OCI-LY7 (cell line): ENCODE measurements at regions of chr20 and their contacts with region 1.

Region 1: DNA sequence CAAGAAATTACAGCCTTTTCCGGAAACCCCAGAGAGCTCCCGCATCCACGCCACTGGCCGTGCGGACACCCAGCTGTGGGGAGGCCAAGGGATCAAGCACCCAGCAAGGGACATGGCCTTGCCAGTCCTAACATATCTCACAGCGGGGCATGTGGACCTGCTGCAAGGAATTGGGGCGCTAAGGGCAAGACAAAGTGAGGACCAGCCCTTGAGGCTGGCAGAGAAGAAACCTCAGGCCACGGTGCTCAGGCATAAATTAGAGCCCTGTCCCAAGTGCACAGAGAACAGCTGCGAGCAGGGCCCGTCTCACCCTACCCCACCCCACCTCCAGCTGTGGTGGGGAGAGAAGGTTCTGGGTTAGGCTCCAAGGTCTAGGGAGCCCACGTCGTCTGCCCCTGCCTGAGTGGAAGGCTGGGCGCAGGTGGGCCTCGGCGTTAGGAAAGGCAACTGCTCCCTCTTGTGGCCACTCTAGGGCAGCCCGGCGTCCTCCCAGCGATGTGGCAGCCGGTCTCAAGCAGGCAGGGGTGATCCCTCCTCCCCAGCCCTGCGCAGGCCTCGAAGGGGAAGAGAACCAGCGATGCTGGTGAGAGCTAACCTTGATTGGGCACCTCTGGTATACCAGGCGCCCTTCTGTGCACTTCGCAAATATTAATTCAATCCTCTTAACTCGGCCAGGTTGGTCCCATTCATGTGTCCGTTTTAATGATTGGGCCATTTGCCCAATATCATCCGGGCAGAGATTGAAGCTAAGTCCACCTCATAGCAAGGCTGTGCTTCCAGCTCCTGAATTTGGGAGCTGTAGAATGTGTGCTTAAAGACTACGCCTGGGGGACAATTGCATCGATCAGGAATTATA is 235.8 kb downstream of the NFATC2 start:
- DNase-seq: peak; percentile 74
- H3K4me3 ChIP-seq: no peak overlapping the region
- H3K27ac ChIP-seq: no peak overlapping the region
- H3K4me1 ChIP-seq: no peaks in the 10 kb centered on the region
- CTCF ChIP-seq: peak; percentile 87

Region 2: DNA sequence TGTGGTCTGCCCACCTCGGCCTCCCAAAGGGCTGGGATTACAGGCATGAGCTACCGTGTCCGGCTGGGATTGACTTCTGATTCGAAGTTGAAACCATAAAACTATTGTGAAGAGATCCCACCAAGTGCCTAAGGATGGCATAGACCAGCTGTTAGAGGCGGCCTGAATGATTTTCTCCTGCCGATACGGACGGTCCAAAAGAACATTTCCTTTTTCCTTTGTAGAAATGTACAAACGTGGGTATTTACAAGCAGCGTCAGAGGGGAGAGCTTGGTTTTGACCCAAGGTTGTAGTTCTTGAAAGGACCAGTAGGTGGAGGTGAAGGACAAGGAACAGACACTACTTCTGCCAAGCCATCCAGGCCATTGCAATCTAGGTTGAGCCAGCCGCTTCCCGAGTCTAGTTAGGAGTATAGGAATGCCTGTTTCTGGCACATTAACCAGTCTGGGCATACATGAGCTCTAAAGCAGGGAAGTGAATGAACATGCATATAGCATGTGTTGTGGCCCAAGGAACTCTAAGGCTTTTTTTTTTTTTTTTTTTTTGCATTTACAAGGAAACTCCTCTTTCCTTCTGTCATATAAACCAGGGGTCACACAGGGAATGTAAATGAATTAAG is 319.0 kb before region 1 on chr20:
- CTCF ChIA-PET with region 1: interaction called, 23 read pairs
- POLR2A ChIA-PET with region 1: no interaction called
- intact Hi-C with region 1: loop called (anchors 1 kb)
- DNase-seq: peak; percentile 81
- H3K4me3 ChIP-seq: no peak overlapping the region
- H3K27ac ChIP-seq: no peak overlapping the region
- H3K4me1 ChIP-seq: peaks cover 10% of the 10 kb centered on the region
- CTCF ChIP-seq: peak; percentile 87

Region 3: GRCh38 chr20:50992733-50993457 is 313.8 kb before region 1 on chr20:
- CTCF ChIA-PET with region 1: interaction called, 23 read pairs
- POLR2A ChIA-PET with region 1: no interaction called
- intact Hi-C with region 1: loop called (anchors 1 kb)
- DNase-seq: peak; percentile 70
- H3K4me3 ChIP-seq: no peak overlapping the region
- H3K27ac ChIP-seq: peak overlapping the region; percentile 38
- H3K4me1 ChIP-seq: peaks cover 12% of the 10 kb centered on the region
- CTCF ChIP-seq: peak; percentile 87

Region 4: DNA sequence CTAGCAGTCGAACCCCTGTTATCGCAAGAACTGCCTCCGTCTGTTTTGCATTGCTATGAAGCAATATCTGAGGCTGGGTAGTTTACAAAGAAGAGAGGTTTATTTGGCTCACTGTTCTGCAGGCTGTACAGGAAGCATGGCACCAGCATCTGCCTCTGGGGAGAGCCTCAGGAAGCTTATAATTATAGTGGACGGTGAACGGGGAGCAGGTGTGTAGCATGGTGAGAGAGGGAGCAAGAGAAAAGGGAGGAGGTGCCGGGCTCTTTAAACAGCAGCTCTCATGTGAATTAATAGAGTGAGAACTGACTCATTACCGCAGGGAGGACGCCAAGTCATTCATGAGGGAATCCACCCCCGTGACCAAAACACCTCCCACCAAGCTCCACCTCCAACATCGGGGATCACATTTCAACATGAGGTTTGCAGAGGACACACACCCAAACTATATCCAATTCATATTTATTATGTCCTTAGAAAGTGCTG is 111.3 kb before region 1 on chr20:
- CTCF ChIA-PET with region 1: no interaction called
- POLR2A ChIA-PET with region 1: no interaction called
- intact Hi-C with region 1: no loop called
- DNase-seq: no peak
- H3K4me3 ChIP-seq: no peak overlapping the region
- H3K27ac ChIP-seq: no peak overlapping the region
- H3K4me1 ChIP-seq: no peaks in the 10 kb centered on the region
- CTCF ChIP-seq: no peak

Region 5: GRCh38 chr20:51220293-51220706 is 86.4 kb before region 1 on chr20:
- CTCF ChIA-PET with region 1: no interaction called
- POLR2A ChIA-PET with region 1: no interaction called
- intact Hi-C with region 1: loop called (anchors 2 kb)
- DNase-seq: peak; percentile 24
- H3K4me3 ChIP-seq: no peak overlapping the region
- H3K27ac ChIP-seq: no peak overlapping the region
- H3K4me1 ChIP-seq: no peaks in the 10 kb centered on the region
- CTCF ChIP-seq: peak; percentile 88